Astrocyte of the cerebellum (primary cell): ENCODE measurements at regions of chr7 and their contacts with region 1.

Region 1: GRCh38 chr7:38318803-38319416 is 45.5 kb upstream of the TARP start:
- DNase-seq: peak; percentile 79
- H3K4me3 ChIP-seq: no peak overlapping the region
- CTCF ChIP-seq: peak; percentile 86

Region 2: DNA sequence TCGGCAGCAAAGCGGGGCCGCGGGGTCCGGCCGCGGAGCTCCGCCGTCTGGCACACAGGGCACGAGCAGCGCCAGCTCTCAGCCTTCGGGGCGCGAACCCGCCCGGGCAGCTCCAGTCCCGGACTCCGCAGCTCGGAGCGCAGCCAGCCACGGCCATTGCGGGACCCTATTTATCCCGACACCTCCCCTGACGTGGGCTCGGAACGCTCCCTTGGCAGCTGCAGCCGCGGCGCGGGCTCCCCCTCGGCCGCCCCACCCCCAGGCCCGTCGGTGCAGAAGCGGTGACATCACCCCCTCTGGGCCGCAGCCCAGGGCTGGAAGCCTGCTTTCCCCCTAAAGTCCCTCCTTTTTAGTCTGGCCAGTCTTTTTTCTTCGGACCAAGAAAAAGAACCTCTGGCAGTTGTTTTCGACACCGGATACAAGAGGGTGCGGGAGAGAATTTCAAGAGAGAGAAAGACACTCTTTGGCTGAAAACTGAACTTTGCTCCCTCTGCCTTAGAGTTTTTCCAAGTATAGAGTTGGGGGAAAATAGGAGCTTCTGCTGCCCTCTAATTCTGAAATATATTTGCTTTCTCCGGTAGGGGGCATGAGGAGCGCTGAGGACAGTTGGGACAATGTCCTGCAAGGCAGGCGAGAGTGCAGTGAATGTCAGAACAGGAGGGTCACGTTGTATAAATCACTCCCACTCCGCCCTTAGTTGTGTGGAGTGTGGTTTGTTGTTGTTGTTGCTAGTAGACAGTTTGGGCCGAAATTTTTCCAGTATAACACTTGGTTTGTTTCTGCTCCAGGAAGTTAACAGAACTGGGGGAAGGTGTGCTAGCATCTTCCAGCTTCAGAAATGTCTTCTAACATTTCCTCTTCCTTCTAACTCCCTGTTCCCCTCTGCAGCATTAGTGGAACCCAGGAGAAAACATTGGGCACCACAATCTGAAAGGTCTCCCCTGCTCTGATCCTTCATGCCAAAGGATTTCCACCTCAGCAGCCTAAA is 401.9 kb before region 1 on chr7 and contains the start of gene SFRP4:
- in situ Hi-C with region 1: loop called (anchors 25 kb)
- DNase-seq: peak; percentile 63
- H3K4me3 ChIP-seq: peak within 1 kb of the TSS; percentile 74
- CTCF ChIP-seq: peak; percentile 77

Region 3: GRCh38 chr7:38107486-38107893 is 211.4 kb before region 1 on chr7:
- in situ Hi-C with region 1: loop called (anchors 25 kb)
- DNase-seq: peak; percentile 57
- H3K4me3 ChIP-seq: no peak overlapping the region
- CTCF ChIP-seq: peak; percentile 79

Region 4: DNA sequence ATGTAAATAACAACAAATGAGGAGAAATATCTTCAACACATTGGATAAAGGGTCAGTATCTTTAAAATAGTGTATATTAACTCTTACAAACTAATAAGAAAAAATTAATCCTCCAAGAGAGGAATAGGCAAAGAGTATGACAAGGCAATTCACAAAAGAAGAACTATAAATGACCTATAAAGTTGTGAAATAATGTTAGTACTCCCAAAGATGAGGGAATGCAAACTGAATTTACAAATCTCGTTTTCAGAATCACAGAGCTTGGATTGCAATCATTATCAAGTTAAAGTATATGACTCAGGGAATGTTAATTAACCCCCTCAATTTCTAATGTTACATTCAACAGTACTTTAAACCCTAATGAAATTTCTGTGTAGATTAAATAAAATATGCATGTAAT is 41.9 kb after region 1 on chr7:
- in situ Hi-C with region 1: no loop called
- DNase-seq: no peak
- H3K4me3 ChIP-seq: no peak overlapping the region
- CTCF ChIP-seq: no peak